Stomach (tissue), 19 donors: ENCODE measurements at regions of chr12 and their contacts with region 1.

Region 1: DNA sequence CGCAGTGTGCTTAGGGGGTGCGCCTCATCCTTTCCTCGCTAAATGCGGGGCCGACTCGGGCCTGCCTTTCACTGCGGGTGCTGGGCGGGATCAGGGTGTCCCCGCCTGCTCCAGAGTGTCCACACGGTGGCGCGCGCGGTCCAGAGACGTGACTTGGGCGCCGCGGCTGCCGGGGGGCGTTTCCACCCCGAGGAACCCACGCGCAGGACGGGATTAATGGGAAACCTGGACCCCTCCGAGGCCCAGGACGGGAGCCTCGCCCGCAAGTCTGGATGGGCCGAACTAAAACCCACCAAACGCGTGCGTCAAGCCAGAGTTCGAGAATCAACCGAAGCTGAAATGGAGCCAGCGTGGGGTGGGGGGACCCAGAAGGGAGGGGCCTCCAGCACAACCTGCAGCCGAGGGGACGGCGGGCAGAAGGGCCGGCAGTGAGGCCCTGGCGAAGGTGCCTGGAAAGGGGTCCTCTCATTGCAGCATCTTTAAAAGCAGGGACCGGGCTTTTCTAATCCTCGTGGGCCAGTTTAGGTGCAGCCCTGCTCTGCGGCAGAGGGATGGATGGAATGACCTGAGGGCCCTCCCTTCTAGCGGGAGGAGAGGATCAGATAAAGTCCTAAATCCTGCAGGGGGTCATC is 93.3 kb downstream of the NINJ2 start:
- DNase-seq: peak; percentile 90 to 95
- H3K4me3 ChIP-seq: peak overlapping the region; percentile 58 to 77 (median 65)
- H3K27ac ChIP-seq: peak overlapping the region; percentile 84 to 94 (median 91)
- H3K4me1 ChIP-seq: peaks cover 25 to 40% (median 33%) of the 10 kb centered on the region in 4 donors
- H3K27me3 ChIP-seq: no peaks in the 10 kb centered on the region
- CTCF ChIP-seq: peak in 5 of 7 experiments; percentile 88 to 95 (median 91)
- EP300 ChIP-seq: no peak
- POLR2A ChIP-seq: no peak

Region 2: DNA sequence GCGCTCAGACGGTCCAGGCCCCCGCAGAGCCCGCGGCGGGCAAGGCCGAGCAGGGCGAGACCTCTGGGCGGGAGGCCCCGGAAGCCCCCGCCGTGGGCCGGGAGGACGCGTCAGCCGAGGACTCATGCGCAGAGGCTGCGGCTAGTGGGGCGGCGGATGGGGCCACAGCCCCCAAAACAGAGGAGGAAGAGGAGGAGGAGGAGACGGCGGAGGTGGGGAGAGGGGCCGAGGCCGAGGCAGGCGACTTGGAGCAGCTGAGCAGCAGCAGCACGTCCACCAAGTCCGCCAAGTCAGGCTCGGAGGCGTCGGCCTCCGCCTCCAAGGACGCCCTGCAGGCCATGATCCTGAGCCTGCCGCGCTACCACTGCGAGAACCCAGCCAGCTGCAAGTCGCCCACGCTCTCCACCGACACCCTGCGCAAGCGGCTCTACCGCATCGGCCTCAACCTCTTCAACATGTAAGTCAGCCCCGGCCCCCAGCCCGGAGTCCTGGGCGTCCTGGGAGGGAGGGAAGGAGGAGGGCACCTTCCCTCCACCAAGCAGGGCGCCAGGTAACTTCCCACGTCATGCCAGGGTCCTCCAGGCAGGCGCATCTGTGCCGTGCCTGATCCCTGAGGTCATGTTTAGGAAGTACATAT is 430.9 kb before region 1 on chr12:
- intact Hi-C with region 1: no loop called
- DNase-seq: peak in 1 of 2 donors; percentile 65
- H3K4me3 ChIP-seq: peak overlapping the region; percentile 24 to 35 (median 32)
- H3K27ac ChIP-seq: no peak overlapping the region
- H3K4me1 ChIP-seq: peaks cover 0 to 16% (median 15%) of the 10 kb centered on the region in 4 donors
- H3K27me3 ChIP-seq: peaks cover 0 to 68% (median 30%) of the 10 kb centered on the region in 3 donors
- CTCF ChIP-seq: no peak
- EP300 ChIP-seq: no peak
- POLR2A ChIP-seq: no peak

Region 3: DNA sequence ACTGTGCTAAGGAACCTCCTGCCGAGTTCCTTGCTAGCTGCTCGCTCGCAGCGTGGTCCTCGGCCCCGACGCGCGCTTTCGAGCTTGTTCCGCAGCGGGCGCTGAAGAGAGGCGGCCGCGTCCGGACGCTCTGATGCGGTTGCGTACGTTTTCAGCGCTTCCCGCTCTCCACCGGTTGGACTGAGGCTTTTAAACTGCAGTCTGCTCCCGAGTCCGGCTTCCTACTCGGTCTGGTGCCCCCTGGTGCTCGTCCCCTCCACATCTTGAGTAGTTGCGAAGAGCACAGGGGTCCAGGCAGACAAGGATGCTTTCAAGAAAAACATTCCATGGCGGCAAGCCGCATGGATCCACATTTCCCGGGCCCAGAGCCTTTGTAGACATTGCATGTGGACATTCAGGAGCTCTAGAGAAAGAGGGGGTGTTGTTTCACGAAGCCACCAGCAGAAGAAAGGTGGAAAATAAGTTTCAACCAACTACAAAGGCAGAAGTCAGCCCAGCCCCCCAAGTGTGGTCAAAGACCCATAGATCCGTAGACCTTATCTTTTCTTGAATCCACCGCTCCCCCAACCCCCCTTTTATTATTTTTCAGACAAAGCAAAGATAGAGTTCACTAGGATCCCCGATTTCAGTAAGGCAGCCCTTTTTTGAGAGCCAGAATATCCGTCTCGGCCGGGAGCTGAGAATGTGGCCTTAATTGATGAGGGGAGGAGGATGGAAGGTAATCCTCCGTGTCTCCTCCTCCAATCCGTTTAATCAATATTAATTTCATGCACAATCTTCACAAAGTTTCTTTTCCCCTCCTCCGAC is 181.5 kb after region 1 on chr12:
- intact Hi-C with region 1: loop called (anchors 10 kb)
- DNase-seq: peak; percentile 92 to 98
- H3K4me3 ChIP-seq: peak overlapping the region; percentile 77 to 94 (median 90)
- H3K27ac ChIP-seq: peak overlapping the region; percentile 86 to 99 (median 99)
- H3K4me1 ChIP-seq: peaks cover 12 to 44% (median 36%) of the 10 kb centered on the region in 4 donors
- H3K27me3 ChIP-seq: no peaks in the 10 kb centered on the region
- CTCF ChIP-seq: peak in 5 of 7 experiments; percentile 53 to 78 (median 60)
- EP300 ChIP-seq: no peak
- POLR2A ChIP-seq: no peak

Region 4: GRCh38 chr12:949453-950191 is 379.7 kb after region 1 on chr12 and contains the start of gene RAD52:
- intact Hi-C with region 1: loop called (anchors 10 kb)
- DNase-seq: peak; percentile 98 to 100
- H3K4me3 ChIP-seq: peak within 1 kb of the TSS; percentile 63 to 90 (median 72)
- H3K27ac ChIP-seq: peak within 1 kb of the TSS; percentile 83 to 94 (median 90)
- H3K4me1 ChIP-seq: peaks cover 6 to 30% (median 16%) of the 10 kb centered on the region in 4 donors
- H3K27me3 ChIP-seq: no peaks in the 10 kb centered on the region
- CTCF ChIP-seq: peak in 6 of 7 experiments; percentile 92 to 99 (median 98)
- EP300 ChIP-seq: no peak
- POLR2A ChIP-seq: peak in 1 of 4 donors; percentile 54
- total RNA-seq, gene RAD52: 8.6 to 62.9 (median 25.1) TPM